ENCODE measurements at regions of chr17 and their contacts with region 1.

Region 1: GRCh38 chr17:32349854-32350665 is at the start of gene ZNF207:
- DNase-seq: peak; percentile 88 to 98 (median 94)

Region 2: DNA sequence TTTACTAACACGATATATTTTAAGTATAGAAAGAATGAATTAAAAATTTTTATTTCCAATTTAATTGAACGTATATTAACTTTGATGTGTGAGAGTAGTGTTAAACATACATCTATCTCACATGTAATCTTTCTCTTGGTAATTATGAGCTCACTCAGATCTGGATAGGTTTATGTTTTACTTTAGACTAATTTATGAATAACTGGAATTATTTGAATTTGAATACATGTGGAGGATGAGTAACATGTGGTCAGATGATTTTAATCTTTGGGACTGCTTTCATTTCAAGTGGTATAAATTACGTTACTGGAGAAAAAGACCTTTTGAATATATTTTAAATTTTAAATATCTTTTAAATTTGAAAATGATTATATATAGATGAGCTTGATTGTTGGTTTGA is 134.4 kb before region 1 on chr17:
- intact Hi-C with region 1: no loop called
- DNase-seq: no peak

Region 3: GRCh38 chr17:32386844-32387243 is 36.8 kb after region 1 on chr17:
- intact Hi-C with region 1: no loop called
- DNase-seq: no peak

Region 4: DNA sequence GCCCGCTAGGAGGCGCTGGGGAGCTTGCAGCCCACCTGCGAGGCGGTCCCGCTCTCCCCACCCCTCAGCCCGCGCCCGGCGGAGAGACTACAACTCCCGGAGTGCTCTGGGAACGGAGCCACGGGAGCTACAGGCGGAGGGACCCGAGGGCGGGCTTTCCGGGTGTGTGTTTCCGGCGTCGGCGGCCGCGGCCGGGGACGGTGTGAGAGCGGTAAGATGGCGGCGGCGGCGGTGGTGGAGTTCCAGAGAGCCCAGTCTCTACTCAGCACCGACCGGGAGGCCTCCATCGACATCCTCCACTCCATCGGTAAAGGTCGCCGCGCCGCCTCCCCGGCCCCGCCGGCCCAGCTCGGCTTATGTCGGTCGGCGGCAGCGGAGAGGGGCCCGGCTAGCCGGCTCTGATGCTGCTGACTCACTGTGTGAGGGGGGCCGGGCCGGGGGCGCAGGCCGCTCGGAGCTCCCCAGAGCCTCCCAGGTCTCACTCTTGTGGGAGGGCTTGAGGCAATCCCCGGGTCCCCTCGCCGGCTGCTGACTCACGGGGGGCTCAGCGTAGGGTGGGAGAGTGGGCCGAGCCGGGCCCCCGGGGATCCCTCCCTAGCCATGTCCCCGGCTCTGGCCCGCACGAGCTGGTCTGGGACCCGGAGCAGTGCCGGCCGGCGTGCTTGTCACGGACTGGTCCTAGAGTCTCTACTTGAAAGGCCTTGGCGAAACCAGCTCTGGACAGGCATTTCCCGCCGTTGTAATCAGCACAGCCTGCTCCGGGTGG is 94.4 kb after region 1 on chr17 and contains the start of gene PSMD11:
- intact Hi-C with region 1: loop called (anchors 10 kb)
- DNase-seq: peak; percentile 93 to 99 (median 98)

Measured in head of caudate nucleus (tissue), 42 donors.